Dendritic cell treated with granulocyte-macrophage colony-stimulating factor and Interleukin-4, amounts not matched to agents 40 ng/mL and 50 ng/mL, for 4 days (primary cell): ENCODE measurements at regions of chr6 and their contacts with region 1.

Region 1: GRCh38 chr6:44636561-44637248 is 249.2 kb downstream of the CDC5L start:
- H3K4me3 Mint-ChIP-seq: no peak overlapping the region
- H3K27ac Mint-ChIP-seq: peak overlapping the region; percentile 30
- H3K4me1 Mint-ChIP-seq: peaks cover 25% of the 10 kb centered on the region
- H3K27me3 Mint-ChIP-seq: peaks cover 19% of the 10 kb centered on the region

Region 2: GRCh38 chr6:44275749-44276648 is 360.7 kb before region 1 on chr6:
- intact Hi-C with region 1: no loop called
- H3K4me3 Mint-ChIP-seq: peak overlapping the region; percentile 10
- H3K27ac Mint-ChIP-seq: no peak overlapping the region
- H3K4me1 Mint-ChIP-seq: peaks cover 16% of the 10 kb centered on the region
- H3K27me3 Mint-ChIP-seq: peaks cover 82% of the 10 kb centered on the region

Region 3: DNA sequence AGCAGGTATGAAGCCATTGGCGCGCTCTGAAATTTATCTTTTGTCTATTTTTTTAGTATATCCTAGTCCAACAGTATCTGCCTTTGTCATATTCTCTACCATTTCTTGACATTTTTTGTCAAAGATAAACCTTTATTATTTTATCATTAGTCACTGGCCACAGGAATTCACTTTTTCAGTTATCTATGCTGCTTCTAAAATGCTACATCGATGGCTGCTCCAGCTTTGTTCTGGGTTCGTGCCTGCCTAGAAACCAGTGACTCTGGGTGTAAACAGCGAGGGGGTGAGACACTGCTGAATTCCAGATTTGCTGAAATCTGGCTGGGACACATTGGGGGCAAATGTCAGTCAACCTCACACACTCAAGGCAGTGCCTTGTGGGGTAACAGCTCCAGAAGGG is 55.8 kb before region 1 on chr6:
- intact Hi-C with region 1: no loop called
- H3K4me3 Mint-ChIP-seq: no peak overlapping the region
- H3K27ac Mint-ChIP-seq: no peak overlapping the region
- H3K4me1 Mint-ChIP-seq: no peaks in the 10 kb centered on the region
- H3K27me3 Mint-ChIP-seq: peaks cover 16% of the 10 kb centered on the region

Region 4: DNA sequence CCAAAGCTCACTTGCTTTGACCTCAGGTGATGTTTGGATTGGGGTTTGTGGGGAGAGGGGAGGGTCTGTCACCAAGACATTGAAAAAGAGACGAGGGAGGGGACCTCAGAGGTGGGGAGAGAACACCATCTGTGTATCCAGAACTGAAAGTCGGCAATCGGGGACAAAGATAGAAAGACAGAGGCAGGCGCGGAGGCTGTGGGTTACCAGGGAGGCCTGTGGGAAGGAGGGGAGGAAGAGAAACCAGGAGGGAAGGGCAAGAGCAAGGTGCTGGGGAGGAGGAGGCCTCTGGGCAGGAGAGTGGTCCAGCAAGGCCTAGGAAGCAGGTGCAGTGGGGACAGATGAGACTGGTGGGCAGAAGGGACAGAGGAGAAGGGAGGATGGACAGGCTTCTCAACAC is 38.0 kb before region 1 on chr6:
- intact Hi-C with region 1: loop called (anchors 5 kb)
- H3K4me3 Mint-ChIP-seq: no peak overlapping the region
- H3K27ac Mint-ChIP-seq: peak overlapping the region; percentile 8
- H3K4me1 Mint-ChIP-seq: peaks cover 50% of the 10 kb centered on the region
- H3K27me3 Mint-ChIP-seq: no peaks in the 10 kb centered on the region

Region 5: GRCh38 chr6:44855562-44856411 is 219.1 kb after region 1 on chr6:
- intact Hi-C with region 1: no loop called
- H3K4me3 Mint-ChIP-seq: no peak overlapping the region
- H3K27ac Mint-ChIP-seq: no peak overlapping the region
- H3K4me1 Mint-ChIP-seq: no peaks in the 10 kb centered on the region
- H3K27me3 Mint-ChIP-seq: no peaks in the 10 kb centered on the region